ENCODE measurements at regions of chr2 and their contacts with region 1.

Region 1: GRCh38 chr2:96305091-96305978 is at the start of gene SNRNP200:
- DNase-seq: peak; percentile 92

Region 2: DNA sequence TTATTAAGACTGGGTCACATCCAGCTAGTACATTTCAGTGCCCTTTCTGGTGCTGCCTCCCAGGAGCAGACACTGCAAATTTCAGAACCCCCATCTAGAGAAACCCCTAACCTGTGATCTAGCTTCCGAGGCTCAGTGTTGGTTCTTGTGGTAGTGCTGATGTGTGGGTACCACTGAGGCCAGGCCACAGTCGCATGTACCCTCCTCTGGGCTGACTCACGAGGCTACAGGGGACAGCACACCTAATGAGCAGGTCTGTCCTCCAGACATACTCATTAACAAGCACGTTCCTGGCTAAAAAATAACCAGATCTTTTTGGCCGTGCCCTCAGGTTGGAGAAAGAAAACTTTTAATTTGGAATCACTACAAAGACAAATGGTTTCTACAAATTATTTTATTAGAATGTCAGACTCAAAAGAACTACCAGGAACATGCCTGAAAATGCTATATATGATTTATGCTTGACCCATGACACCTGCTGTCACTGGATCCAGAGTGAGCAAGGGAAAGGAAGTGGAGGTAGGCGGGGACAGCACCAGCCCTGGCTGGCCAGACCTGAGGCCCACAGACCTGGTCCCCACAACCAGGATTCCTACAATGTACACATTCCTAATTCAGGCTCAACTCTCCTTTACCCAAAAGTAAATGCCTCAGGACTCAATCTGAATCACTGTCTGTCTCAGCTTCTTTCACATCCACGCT is 30.8 kb before region 1 on chr2:
- CTCF ChIA-PET with region 1: no interaction called
- POLR2A ChIA-PET with region 1: no interaction called
- DNase-seq: no peak

Region 3: DNA sequence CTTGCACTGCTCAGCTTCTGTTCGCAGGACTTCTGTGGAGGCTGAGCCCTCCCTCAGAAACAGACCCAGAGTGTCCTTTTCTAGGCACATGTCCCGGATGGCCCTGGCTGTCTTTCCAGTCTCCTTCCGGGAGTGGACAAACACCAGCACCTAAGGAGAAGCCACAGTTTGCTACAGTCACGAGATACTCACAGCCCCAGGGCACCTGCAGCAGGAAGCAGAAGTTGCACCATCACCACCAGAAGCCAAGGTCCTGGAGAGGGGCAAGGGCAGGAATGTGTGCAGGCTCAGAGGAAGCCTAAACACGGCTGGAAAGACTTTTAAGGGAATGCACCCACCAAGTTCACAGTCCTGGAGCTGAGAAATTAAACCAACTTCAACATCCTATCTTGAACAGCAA is 13.6 kb before region 1 on chr2:
- CTCF ChIA-PET with region 1: no interaction called
- POLR2A ChIA-PET with region 1: interaction called, 10 read pairs
- DNase-seq: no peak

Region 4: DNA sequence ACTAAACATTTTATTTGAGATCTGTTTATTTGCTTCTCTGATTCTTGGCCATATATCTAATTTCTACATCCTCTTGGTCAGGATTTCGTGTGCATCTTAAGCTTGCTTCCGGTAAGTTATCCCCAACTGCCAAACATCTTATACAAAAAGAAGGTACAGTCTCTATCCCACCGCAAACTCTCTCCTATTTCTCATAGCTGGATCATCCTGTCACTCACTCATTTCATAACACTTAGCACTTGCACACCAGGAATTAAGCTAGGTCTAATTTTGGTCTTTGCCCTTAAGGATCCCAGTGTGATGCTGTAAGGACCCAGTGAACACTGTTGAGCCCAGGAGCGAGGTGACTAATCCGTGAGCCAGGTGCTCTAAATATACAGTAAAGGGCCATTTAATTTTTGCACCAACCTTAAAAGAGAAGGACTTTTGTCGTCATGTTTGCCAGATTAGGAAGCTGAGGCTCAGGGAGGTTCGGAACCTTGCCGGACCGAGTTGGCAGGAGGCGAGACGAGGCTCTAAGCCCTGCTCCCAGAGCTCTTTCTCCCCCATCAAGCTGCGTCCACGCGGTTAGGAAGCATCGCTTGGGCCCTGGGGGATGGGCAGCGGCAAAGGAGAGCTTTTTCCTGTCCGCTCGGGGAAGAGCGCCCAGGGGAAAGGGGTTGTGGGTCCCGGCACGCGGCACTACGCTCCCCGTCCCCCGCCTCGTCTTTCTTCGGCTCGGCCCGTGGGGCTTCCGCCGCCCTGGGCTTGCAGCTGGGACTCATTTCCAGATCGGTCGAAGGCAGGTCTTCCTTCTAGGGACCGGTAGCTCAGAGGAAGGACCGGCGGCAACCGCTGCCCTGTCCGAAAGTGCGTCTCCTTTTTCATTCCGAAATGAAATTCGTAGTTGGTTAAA is 15.6 kb after region 1 on chr2:
- CTCF ChIA-PET with region 1: no interaction called
- POLR2A ChIA-PET with region 1: interaction called, 60 read pairs
- DNase-seq: peak; percentile 31

Region 5: DNA sequence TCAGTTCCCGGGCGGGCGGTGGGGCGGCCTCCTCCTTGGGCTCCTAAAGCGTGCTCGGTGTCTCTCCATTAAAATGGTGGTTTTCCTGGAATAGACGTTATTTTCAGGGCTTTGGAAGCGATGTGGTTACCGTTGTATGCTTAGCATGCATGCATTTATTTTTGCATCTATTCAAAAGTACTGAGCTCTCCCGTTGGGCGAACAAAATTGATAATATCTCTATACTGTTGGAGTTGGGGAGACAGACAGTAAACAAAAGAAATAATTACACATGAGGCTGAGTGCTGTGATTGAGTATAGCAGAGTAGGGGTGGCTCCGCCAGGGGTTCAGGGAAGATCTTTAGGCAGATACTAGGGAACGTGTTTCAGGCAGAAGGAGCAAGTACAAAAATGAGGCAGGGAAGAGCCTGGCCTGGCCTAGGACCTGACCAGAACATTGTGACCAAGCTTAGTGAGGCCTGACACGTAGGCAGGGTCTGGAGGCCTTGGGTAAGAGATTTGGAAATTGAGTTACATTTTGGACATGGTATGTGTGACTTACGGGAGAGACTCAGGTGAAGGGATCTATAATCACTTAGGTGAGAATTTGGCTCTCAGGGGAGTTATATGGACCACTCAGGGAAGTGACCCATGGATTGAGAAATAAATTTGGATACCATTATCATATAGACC is 30.9 kb after region 1 on chr2:
- CTCF ChIA-PET with region 1: no interaction called
- POLR2A ChIA-PET with region 1: interaction called, 33 read pairs
- DNase-seq: no peak

Measured in HEK293T (cell line).